ENCODE measurements at regions of chr1 and their contacts with region 1.

Region 1: DNA sequence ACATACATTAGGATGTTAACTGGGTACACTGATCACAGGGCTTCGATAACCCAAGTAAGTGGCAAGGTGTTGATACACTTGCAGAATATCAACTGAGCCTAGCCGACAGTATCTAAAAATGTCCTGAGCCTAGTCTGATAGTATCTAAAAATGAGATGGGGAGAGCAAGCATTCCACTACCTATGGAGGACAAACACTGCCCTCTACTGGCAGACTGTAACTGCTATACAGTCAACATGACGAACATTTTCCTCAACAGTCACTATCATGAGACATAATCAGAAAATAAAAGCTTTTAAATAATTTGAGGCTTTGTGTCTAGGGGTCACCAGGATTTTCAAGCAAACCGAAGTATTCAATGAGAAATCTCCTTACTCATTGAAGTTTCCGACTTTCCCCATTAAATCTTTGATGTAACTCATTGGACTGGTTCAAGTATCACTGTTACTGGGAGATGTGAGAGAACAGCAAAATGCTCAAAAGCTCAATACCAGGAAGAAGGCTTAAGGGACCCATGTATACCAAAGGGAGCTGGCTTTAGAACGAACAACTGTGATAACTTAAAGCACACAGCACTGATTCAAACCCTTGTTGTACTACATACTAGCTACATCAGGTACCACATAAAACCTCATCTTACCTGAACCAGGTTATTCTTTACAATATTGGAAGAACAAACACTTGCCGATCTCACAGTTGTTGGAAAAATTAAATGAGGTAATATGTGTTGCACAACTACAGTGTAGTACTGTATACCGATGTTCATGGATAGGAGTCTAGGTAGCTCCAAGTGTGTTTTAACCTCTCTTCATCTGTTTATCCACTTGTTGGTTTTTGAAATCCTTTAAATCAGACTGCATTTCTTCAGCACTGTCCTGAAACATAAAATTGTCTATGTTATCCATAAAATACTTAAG is 31.1 kb upstream of the SLC45A3 start:
- DNase-seq: peak in 5 of 10 donors; percentile 19 to 74 (median 44)

Region 2: GRCh38 chr1:205658943-205659581 is 52.3 kb before region 1 on chr1:
- intact Hi-C with region 1: loop called (anchors 1 kb)
- DNase-seq: peak; percentile 79 to 98 (median 90)

Region 3: DNA sequence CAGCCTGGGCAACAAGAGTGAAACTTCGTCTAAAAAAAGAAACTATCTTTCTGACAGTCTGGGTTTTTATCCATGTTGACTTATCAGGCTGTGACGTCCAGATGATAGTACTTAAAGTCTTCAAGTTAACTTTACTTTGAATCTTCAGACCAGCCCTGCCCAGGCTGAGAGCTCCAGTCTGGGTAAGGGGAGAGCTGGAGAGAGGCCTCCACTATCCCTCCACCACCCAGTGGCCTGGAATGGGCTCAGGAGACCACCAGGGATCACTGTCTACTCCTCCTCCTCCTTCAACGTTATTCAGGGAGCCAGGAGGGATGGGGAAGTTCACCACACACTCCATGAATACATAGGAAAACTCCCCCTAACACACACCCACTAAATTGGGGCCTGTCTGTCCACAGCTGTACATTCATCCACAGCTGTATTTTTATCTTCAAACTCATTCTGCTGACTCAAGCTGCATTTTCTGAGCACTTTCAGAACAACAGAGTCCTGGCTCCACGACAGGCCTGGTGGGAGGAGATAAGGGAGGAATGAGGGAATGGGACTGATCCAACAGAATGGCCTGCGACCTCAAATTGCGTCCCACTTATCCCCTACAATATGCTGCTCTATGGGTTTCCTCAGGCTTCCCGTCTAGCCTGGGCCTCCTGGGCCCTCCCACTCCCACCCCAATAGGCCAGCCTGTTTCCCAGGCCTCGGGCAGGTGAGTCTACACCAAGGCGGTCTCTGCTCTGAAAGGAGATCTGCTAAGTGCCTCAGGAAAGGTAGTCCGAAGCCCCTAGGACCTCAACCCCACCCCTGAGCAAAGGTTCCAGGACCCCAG is 32.9 kb before region 1 on chr1:
- intact Hi-C with region 1: loop called (anchors 5 kb)
- DNase-seq: peak in 1 of 10 donors; percentile 35

Region 4: GRCh38 chr1:205977402-205978014 is 266.1 kb after region 1 on chr1:
- intact Hi-C with region 1: no loop called
- DNase-seq: peak; percentile 59 to 97 (median 86)

Measured in posterior cingulate gyrus (tissue), 11 donors.